ENCODE measurements at regions of chr1 and their contacts with region 1.

Region 1: GRCh38 chr1:153532769-153533599 is 2.8 kb downstream of the S100A6 start:
- DNase-seq: peak; percentile 76
- H3K4me3 ChIP-seq: peak overlapping the region in 2 of 3 experiments; percentile 18 to 73
- H3K27ac ChIP-seq: peak overlapping the region; percentile 73
- H3K4me1 ChIP-seq: peaks cover 44% of the 10 kb centered on the region
- H3K27me3 ChIP-seq: no peaks in the 10 kb centered on the region
- CTCF ChIP-seq: peak; percentile 56 to 78

Region 2: DNA sequence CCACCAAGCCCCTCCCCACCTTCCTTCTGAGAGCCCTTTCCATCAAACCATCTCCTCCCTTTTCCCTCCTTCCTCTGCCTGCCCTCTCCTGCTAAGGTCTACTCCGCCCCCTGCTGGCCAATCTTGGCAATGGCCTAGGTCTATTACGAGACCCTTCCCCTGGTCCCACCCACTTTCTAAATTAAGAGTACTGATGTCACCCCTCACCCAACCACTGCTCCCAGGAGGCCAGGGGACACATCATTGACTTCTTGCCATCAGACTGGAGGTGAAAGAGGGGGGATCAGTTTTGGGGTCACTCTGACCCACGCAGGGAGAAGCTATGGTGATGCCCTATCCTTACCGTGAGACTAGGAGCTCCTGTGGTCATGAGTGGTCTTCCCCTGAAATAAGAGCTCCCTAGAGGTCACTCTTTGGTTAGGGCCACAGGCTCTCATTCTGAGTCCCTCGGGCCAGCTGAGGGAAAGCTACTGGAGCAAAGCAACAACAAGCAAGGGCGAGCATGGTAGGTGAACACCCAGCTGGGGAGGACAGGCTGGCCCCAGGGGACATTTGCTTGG is 37.9 kb before region 1 on chr1:
- CTCF ChIA-PET with region 1: no interaction called
- dilution Hi-C with region 1: no loop called
- in situ Hi-C with region 1: no loop called
- intact Hi-C with region 1: no loop called
- DNase-seq: no peak
- H3K4me3 ChIP-seq: no peak overlapping the region
- H3K27ac ChIP-seq: no peak overlapping the region
- H3K4me1 ChIP-seq: peaks cover 36% of the 10 kb centered on the region
- H3K27me3 ChIP-seq: no peaks in the 10 kb centered on the region
- CTCF ChIP-seq: peak; percentile 65 to 90

Region 3: GRCh38 chr1:153545067-153546055 is 12.4 kb after region 1 on chr1 and contains the start of gene S100A4:
- CTCF ChIA-PET with region 1: interaction called, 4 read pairs
- dilution Hi-C with region 1: no loop called
- in situ Hi-C with region 1: no loop called
- intact Hi-C with region 1: loop called (anchors 1 kb)
- DNase-seq: peak; percentile 92
- H3K4me3 ChIP-seq: no peak within 1 kb of the TSS
- H3K27ac ChIP-seq: peak within 1 kb of the TSS; percentile 53
- H3K4me1 ChIP-seq: peaks cover 70% of the 10 kb centered on the region
- H3K27me3 ChIP-seq: no peaks in the 10 kb centered on the region
- CTCF ChIP-seq: no peak
- total RNA-seq, gene S100A4: 4.3 to 9.9 TPM

Region 4: GRCh38 chr1:153626922-153627796 is 94.2 kb after region 1 on chr1 and contains the start of gene S100A13:
- CTCF ChIA-PET with region 1: no interaction called
- dilution Hi-C with region 1: no loop called
- in situ Hi-C with region 1: no loop called
- intact Hi-C with region 1: loop called (anchors 1 kb)
- DNase-seq: peak; percentile 93
- H3K4me3 ChIP-seq: peak within 1 kb of the TSS; percentile 57 to 69 (median 64)
- H3K27ac ChIP-seq: peak within 1 kb of the TSS; percentile 79
- H3K4me1 ChIP-seq: peaks cover 22% of the 10 kb centered on the region
- H3K27me3 ChIP-seq: no peaks in the 10 kb centered on the region
- CTCF ChIP-seq: peak; percentile 65 to 76
- total RNA-seq, gene S100A13: 72.0 to 213 TPM

Measured in mammary epithelial cell (primary cell).